ENCODE measurements at regions of chr11 and their contacts with region 1.

Region 1: DNA sequence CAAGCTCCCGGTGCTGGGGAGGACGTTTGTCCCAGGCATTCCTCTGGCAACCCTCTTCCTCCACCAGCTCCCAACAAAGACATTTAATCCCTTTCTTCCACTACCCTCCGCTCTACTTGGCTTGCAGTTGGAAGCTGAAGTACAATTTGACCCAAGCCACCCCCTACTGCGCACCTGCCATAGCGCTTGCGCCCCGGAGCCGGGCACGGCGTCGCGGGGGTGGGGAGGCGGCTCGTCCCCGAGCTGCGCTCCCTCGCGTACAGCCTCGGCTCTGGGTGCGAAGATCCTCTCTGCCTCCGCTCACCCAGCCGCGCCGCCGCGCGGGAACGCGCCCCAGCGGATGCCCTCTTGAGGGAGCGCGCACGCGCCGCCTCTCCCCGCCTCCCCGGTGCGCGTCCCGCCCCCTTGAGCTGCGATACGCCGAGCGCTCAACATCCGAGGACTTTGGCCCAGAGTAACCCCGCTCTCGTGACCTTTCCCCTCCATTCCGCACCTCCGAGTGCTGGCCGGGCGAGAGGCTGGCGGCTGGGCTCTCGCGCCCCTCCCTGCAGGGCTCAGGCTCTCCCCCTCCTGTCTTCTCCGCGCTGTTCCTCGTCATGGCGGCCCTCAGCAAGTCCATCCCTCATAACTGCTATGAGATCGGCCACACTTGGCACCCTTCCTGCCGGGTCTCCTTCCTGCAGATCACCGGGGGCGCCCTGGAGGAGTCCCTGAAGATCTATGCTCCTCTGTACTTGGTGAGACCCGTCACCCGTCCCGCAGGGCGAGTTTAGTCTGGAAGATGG is at the start of gene TMEM135:
- DNase-seq: peak; percentile 98
- ATAC-seq: peak; percentile 93
- H3K4me3 ChIP-seq: peak within 1 kb of the TSS; percentile 97
- H3K27ac ChIP-seq: peak within 1 kb of the TSS; percentile 72
- H3K4me1 ChIP-seq: peaks cover 28% of the 10 kb centered on the region
- H3K27me3 ChIP-seq: no peaks in the 10 kb centered on the region
- CTCF ChIP-seq: 0 out of 2 replicates have a peak, but pooled peaks have one; percentile 13
- total RNA-seq, gene TMEM135: 14.0 and 20.2 TPM in 2 replicates

Region 2: GRCh38 chr11:86955361-86956120 is 82.1 kb before region 1 on chr11 and contains the start of gene FZD4:
- CTCF ChIA-PET with region 1: no interaction called
- POLR2A ChIA-PET with region 1: no interaction called
- intact Hi-C with region 1: loop called (anchors 5 kb)
- DNase-seq: peak; percentile 94
- ATAC-seq: peak; percentile 89
- H3K4me3 ChIP-seq: peak within 1 kb of the TSS; percentile 96
- H3K27ac ChIP-seq: peak within 1 kb of the TSS; percentile 71
- H3K4me1 ChIP-seq: peaks cover 35% of the 10 kb centered on the region
- H3K27me3 ChIP-seq: no peaks in the 10 kb centered on the region
- CTCF ChIP-seq: peak; percentile 47; the same call in 1 of the 2 replicates
- total RNA-seq, gene FZD4: 17.3 and 17.7 TPM in 2 replicates

Region 3: DNA sequence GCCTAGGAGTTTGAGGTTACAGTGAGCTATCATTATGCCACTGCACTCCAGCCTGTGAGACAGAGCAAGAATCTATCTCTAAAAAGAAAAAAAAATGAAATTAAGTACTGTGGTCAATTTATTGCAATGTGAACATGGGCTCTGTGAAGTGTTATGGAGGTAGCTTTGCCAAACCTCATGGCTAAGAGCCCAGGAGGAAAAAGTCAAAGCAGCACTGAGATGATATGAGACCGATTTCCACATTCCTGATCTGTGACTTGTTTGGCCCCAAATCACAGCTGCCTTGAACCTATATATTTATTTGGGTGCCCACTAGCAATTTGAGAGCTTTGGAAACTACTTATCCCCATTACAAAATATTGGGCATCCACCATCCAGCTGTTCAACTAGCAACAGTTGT is 29.7 kb before region 1 on chr11:
- CTCF ChIA-PET with region 1: no interaction called
- POLR2A ChIA-PET with region 1: no interaction called
- intact Hi-C with region 1: loop called (anchors 2 kb)
- DNase-seq: peak; percentile 31
- ATAC-seq: no peak
- H3K4me3 ChIP-seq: no peak overlapping the region
- H3K27ac ChIP-seq: no peak overlapping the region
- H3K4me1 ChIP-seq: peaks cover 31% of the 10 kb centered on the region
- H3K27me3 ChIP-seq: no peaks in the 10 kb centered on the region
- CTCF ChIP-seq: no peak

Region 4: GRCh38 chr11:87072787-87073186 is 35.1 kb after region 1 on chr11:
- CTCF ChIA-PET with region 1: no interaction called
- POLR2A ChIA-PET with region 1: no interaction called
- intact Hi-C with region 1: loop called (anchors 2 kb)
- DNase-seq: peak; percentile 31
- ATAC-seq: peak; percentile 97
- H3K4me3 ChIP-seq: no peak overlapping the region
- H3K27ac ChIP-seq: peak overlapping the region; percentile 20; the same call in 1 of the 2 replicates
- H3K4me1 ChIP-seq: 0 out of 2 replicates have a peak, but pooled peaks cover 8% of the 10 kb centered on the region
- H3K27me3 ChIP-seq: no peaks in the 10 kb centered on the region
- CTCF ChIP-seq: no peak

Region 5: DNA sequence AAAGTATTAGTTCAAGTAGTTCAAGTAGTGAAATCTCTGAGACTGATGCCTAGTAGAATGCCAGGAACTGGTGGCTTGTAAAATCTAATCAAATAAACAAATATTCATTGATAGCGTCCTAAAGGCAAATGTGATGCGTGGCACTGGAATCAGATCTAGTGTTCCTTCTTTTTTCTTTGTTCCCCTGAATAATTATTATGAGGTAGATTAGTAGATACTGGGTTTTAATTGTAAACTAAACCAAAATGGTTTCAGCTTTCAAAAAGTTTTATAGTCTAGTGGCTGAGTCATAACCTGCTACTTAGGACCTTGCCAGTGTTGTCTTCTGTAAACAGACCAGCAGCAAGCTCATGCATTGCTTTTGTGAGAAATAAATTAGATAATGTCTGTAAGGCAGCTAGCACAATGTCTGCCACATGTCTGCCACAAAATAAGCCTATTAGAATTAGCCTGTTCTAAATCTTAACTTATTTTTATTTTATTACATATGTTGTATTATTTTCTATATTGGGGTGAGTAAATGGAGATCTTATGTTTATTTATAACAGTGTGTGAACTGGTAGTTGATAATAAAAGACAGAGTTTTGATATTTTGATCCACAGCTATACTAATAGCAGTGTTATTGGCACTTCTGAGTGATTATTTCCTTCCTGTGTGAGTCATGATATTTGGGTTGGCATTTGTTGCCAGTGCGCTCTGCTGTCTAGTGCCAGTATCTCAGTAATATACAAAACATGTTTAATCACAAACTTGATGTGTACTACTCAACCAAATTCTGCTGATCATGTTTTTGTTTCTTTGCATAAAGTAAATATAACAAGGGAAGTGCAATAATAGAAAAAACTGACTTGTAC is 135.8 kb after region 1 on chr11:
- CTCF ChIA-PET with region 1: no interaction called
- POLR2A ChIA-PET with region 1: interaction called, 6 read pairs
- intact Hi-C with region 1: loop called (anchors 1 kb)
- DNase-seq: peak; percentile 87
- ATAC-seq: peak; percentile 95
- H3K4me3 ChIP-seq: 0 out of 2 replicates have a peak overlapping the region, but pooled peaks have one; percentile 20
- H3K27ac ChIP-seq: peak overlapping the region; percentile 80
- H3K4me1 ChIP-seq: peaks cover 27% of the 10 kb centered on the region
- H3K27me3 ChIP-seq: no peaks in the 10 kb centered on the region
- CTCF ChIP-seq: no peak

Region 6: GRCh38 chr11:87666730-87667129 is 629.1 kb after region 1 on chr11:
- CTCF ChIA-PET with region 1: no interaction called
- POLR2A ChIA-PET with region 1: no interaction called
- intact Hi-C with region 1: no loop called
- DNase-seq: no peak
- ATAC-seq: no peak
- H3K4me3 ChIP-seq: no peak overlapping the region
- H3K27ac ChIP-seq: no peak overlapping the region
- H3K4me1 ChIP-seq: no peaks in the 10 kb centered on the region
- H3K27me3 ChIP-seq: peaks cover 15% of the 10 kb centered on the region; the same call in 1 of the 2 replicates
- CTCF ChIP-seq: no peak

Measured in PC-3 (cell line).